ENCODE measurements at regions of chr4 and their contacts with region 1.

Region 1: GRCh38 chr4:27010334-27010940 is 149.8 kb downstream of the STIM2 start:
- DNase-seq: peak; percentile 33
- CTCF ChIP-seq: peak; percentile 80

Region 2: GRCh38 chr4:26459054-26459755 is 551.2 kb before region 1 on chr4:
- CTCF ChIA-PET with region 1: interaction called, 10 read pairs
- POLR2A ChIA-PET with region 1: no interaction called
- DNase-seq: peak; percentile 65
- CTCF ChIP-seq: peak; percentile 55

Region 3: DNA sequence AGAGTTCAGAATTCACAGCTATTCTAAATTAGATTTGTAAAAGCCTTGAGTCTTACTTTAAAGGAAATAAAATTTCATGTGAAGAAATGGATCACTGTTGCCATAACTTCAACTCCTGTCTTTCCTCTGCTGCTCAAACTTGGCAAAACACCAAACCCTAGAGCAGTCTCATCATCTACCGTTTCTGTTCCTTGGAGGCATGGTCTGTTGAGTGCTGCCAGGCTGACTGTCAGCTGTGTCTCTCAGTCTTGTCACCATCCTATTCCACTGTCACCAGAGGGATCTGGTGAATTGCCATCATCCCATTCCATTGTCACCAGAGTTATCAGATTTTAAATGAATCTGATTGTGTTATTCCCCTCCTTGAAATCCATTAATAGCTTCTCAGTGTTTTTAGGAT is 94.2 kb before region 1 on chr4:
- CTCF ChIA-PET with region 1: interaction called, 12 read pairs
- POLR2A ChIA-PET with region 1: no interaction called
- DNase-seq: no peak
- CTCF ChIP-seq: no peak

Region 4: GRCh38 chr4:26992657-26993361 is 17.6 kb before region 1 on chr4:
- CTCF ChIA-PET with region 1: interaction called, 17 read pairs
- POLR2A ChIA-PET with region 1: no interaction called
- DNase-seq: peak; percentile 60
- CTCF ChIP-seq: no peak

Region 5: GRCh38 chr4:27217261-27217769 is 206.9 kb after region 1 on chr4:
- CTCF ChIA-PET with region 1: no interaction called
- POLR2A ChIA-PET with region 1: no interaction called
- DNase-seq: no peak
- CTCF ChIP-seq: no peak

Measured in GM10248 (cell line).